ENCODE measurements at regions of chr6 and their contacts with region 1.

Region 1: GRCh38 chr6:152338335-152339125 is 298.6 kb downstream of the SYNE1 start:
- DNase-seq: peak in 2 of 3 donors; percentile 47 to 52
- H3K4me3 ChIP-seq: no peak overlapping the region
- H3K4me3 Mint-ChIP-seq: no peak overlapping the region
- H3K27ac ChIP-seq: no peak overlapping the region
- H3K27ac Mint-ChIP-seq: no peak overlapping the region
- H3K4me1 ChIP-seq: no peaks in the 10 kb centered on the region
- H3K4me1 Mint-ChIP-seq: peaks cover 7% of the 10 kb centered on the region
- H3K27me3 ChIP-seq: no peaks in the 10 kb centered on the region
- H3K27me3 Mint-ChIP-seq: peaks cover 0 to 2% (median 2%) of the 10 kb centered on the region in 3 donors
- CTCF ChIP-seq: peak; percentile 89

Region 2: DNA sequence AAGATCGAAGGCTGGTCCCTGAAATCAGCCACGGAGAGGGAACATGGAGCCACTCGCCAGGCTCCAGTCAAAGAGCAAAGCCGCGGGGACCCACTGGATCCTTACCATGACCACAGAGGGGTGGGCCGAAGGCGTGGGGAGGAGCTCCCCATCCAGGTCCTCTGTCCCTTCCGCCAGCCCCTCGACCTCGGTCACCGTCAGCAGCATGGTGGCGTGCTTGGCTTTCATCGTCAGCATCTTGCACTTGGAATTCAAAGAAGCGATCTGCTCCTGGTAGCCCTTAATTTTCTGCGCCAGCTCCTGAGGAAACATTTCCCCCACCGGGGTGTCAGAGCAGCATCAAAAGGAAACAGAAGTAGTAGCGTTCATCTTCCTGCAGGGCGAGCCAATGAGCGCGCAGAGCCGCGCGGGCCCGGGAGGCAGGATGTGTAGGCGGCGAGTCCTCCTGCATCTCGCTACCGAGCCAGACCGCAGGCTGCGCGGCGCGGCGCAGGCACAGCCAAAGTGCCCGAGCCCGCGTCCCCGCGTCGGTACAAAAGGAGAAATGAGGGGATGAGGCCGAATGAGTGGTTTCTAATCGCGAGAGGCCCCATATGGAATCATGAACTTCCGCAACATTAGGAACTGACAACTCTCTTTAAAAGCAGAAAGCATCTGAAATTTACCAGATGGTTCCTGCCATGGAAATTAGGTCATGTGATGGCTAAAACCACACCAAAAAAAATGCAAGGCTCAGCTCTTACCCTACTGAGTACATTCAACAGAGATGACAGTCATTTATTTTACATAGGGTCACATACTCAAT is 36.6 kb before region 1 on chr6:
- intact Hi-C with region 1: loop called in 1 of 2 experiments (anchors 5 kb)
- DNase-seq: peak; percentile 80 to 90 (median 83)
- H3K4me3 ChIP-seq: peak overlapping the region; percentile 79 to 91 (median 86)
- H3K4me3 Mint-ChIP-seq: peak overlapping the region; percentile 100
- H3K27ac ChIP-seq: peak overlapping the region; percentile 87 to 93
- H3K27ac Mint-ChIP-seq: peak overlapping the region; percentile 95 to 100 (median 99)
- H3K4me1 ChIP-seq: peaks cover 14 to 16% of the 10 kb centered on the region in 2 donors
- H3K4me1 Mint-ChIP-seq: peaks cover 22% of the 10 kb centered on the region
- H3K27me3 ChIP-seq: no peaks in the 10 kb centered on the region
- H3K27me3 Mint-ChIP-seq: no peaks in the 10 kb centered on the region
- CTCF ChIP-seq: peak; percentile 66

Region 3: GRCh38 chr6:152587473-152587872 is 248.9 kb after region 1 on chr6:
- intact Hi-C with region 1: no loop called
- DNase-seq: peak; percentile 53 to 82 (median 74)
- H3K4me3 ChIP-seq: peak overlapping the region in 1 of 3 experiments; percentile 50
- H3K4me3 Mint-ChIP-seq: peak overlapping the region in 1 of 2 donors; percentile 48
- H3K27ac ChIP-seq: peak overlapping the region in 1 of 2 donors; percentile 55
- H3K27ac Mint-ChIP-seq: peak overlapping the region; percentile 15 to 86 (median 79)
- H3K4me1 ChIP-seq: peaks cover 25 to 28% of the 10 kb centered on the region in 2 donors
- H3K4me1 Mint-ChIP-seq: peaks cover 40% of the 10 kb centered on the region
- H3K27me3 ChIP-seq: no peaks in the 10 kb centered on the region
- H3K27me3 Mint-ChIP-seq: peaks cover 0 to 1% (median 0%) of the 10 kb centered on the region in 3 donors
- CTCF ChIP-seq: no peak

Measured in CD14-positive monocyte (primary cell).